ENCODE measurements at regions of chr17 and their contacts with region 1.

Region 1: DNA sequence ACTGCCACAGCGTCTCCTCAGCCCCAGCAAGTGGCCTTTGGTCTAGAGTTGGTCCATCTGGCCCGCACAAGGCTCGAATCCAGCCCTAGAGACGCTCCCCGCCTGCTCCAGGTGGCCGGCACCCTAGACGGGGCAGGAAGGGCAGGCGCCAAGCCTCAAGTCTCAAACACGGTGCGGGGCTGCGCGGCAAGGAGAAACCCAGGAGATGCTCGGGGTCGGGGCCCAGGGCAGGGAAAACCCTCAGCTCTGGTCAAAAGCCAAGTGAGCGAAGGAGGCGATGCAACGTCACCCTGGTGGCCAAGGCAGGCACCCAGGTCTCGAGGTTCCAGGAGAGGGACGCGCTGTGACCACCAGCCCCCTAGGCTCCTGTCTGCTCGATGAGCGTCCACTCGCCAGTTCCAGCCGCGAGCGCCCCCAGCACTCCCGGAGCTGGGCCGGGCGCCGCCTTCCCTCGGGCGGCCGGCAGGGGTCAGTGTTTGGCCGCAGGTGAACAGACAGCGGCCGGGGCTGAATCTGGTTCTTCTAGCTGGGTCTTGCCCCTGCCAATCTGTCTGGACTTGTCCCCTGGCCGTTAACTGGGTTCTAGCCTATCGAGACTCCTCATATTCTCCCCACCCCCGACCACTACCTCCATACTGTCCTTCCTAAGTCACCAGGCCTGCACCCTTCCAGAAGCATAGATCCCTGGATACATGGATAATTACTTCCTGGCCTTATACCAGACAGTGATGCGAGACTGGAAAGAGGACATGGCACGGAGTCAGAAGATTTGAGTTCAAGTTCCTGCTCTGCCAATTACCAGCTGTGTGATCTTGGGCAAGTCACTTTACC is 44.0 kb downstream of the PRAC1 start:
- DNase-seq: peak; percentile 79
- H3K4me3 Mint-ChIP-seq: no peak overlapping the region
- H3K27ac Mint-ChIP-seq: no peak overlapping the region
- H3K4me1 Mint-ChIP-seq: peaks cover 2% of the 10 kb centered on the region
- H3K27me3 Mint-ChIP-seq: peaks cover 29% of the 10 kb centered on the region

Region 2: DNA sequence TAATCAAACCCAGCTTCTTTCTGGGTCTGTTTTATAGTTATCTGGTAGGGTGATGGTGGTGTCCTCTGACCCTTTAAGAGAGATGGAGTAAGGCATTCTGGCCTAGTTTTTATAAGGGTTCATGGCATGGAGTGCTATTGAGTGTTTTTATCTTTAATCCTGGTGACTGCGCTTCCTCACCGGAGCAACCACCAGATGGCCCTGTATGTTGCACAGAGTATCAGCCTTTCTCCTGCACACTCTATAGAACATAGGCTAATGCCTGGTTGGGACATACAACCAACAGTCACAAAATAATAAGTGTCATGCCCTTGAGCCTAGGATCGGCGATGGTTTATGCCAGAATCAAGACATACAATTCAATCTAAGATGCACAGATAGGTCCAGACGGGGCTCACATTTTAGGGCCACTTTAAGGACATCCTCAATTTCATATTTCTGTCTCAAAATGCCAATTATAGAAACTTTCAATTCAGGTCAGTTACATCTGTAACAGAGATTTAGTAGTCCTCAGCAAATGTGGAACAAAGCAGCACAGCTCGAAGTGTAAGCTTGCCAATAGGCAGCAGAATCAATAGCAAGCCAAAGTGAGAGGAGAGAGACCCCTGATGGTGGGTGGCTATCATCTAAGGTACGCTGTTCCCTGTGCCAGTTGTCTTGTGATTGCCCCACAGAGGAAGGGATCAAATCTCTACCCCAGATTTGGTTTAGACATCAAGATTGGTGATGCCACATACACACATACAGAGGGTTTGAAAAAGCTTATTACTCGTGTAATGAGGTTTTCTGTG is 15.0 kb before region 1 on chr17:
- CTCF ChIA-PET with region 1: interaction called, 33 read pairs
- POLR2A ChIA-PET with region 1: no interaction called
- intact Hi-C with region 1: no loop called
- DNase-seq: no peak
- H3K4me3 Mint-ChIP-seq: no peak overlapping the region
- H3K27ac Mint-ChIP-seq: no peak overlapping the region
- H3K4me1 Mint-ChIP-seq: no peaks in the 10 kb centered on the region
- H3K27me3 Mint-ChIP-seq: peaks cover 8% of the 10 kb centered on the region

Region 3: GRCh38 chr17:48718761-48719641 is 40.6 kb after region 1 on chr17:
- CTCF ChIA-PET with region 1: interaction called, 49 read pairs
- POLR2A ChIA-PET with region 1: no interaction called
- intact Hi-C with region 1: loop called (anchors 5 kb)
- DNase-seq: no peak
- H3K4me3 Mint-ChIP-seq: peak overlapping the region; percentile 33
- H3K27ac Mint-ChIP-seq: peak overlapping the region; percentile 5
- H3K4me1 Mint-ChIP-seq: peaks cover 21% of the 10 kb centered on the region
- H3K27me3 Mint-ChIP-seq: peaks cover 78% of the 10 kb centered on the region

Region 4: GRCh38 chr17:48738803-48739526 is 60.6 kb after region 1 on chr17:
- CTCF ChIA-PET with region 1: interaction called, 11 read pairs
- POLR2A ChIA-PET with region 1: no interaction called
- intact Hi-C with region 1: no loop called
- DNase-seq: no peak
- H3K4me3 Mint-ChIP-seq: peak overlapping the region; percentile 29
- H3K27ac Mint-ChIP-seq: no peak overlapping the region
- H3K4me1 Mint-ChIP-seq: peaks cover 8% of the 10 kb centered on the region
- H3K27me3 Mint-ChIP-seq: peaks cover 89% of the 10 kb centered on the region

Region 5: DNA sequence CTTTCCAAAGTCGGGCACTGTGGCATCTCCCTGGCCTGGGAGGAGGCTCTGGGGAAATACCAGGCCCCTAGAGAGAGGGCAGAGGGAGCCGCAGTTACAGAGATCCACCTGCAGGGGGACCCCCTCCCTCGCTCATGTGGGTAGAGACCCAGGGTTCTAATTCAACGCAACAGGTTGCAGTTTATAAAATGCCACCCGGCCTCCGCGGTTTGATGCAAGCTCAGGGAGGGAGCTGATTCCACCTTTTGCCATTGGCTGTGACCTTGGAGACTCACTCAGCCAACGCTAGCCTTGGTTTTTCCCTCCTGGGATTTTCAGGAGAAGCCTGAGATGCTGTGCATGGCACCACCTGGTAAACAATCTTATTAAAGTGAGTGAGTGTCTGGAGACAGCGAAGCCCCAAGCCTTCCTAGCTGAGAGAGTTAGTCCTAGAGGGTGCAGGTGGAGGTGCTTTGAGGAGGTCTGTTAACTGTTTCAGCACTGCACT is 126.6 kb after region 1 on chr17:
- CTCF ChIA-PET with region 1: interaction called, 40 read pairs
- POLR2A ChIA-PET with region 1: no interaction called
- intact Hi-C with region 1: no loop called
- DNase-seq: peak; percentile 76
- H3K4me3 Mint-ChIP-seq: no peak overlapping the region
- H3K27ac Mint-ChIP-seq: no peak overlapping the region
- H3K4me1 Mint-ChIP-seq: no peaks in the 10 kb centered on the region
- H3K27me3 Mint-ChIP-seq: peaks cover 11% of the 10 kb centered on the region